Left lung (tissue), 14 donors: ENCODE measurements at regions of chr4 and their contacts with region 1.

Region 1: GRCh38 chr4:143482840-143483239 is 30.7 kb upstream of the SMARCA5 start:
- DNase-seq: peak in 2 of 4 donors; percentile 37 to 61
- ATAC-seq: peak; percentile 83
- H3K4me3 ChIP-seq: no peak overlapping the region
- H3K27ac ChIP-seq: no peak overlapping the region
- H3K4me1 ChIP-seq: no peaks in the 10 kb centered on the region
- H3K27me3 ChIP-seq: no peaks in the 10 kb centered on the region
- CTCF ChIP-seq: peak; percentile 27 to 50

Region 2: DNA sequence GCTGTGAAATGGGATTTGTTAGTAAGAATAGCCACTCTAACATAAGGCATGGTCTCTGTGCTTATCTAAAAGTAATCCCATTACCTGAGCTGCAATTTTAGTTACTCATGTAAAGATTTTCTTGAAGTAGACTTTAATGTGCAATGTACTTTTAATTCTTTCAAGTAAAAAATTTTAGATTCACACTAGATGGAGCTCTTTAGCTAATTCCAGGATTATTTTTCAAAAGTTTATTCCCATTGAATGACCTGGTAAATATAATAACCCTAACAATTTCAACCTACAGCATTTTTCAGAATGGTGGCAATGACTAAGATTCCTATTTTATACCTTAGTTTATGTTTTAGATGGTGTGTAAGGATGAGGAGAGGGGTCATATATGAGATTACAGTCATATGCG is 280.0 kb before region 1 on chr4:
- intact Hi-C with region 1: loop called in 1 of 2 experiments (anchors 5 kb)
- DNase-seq: peak in 1 of 4 donors; percentile 13
- ATAC-seq: no peak
- H3K4me3 ChIP-seq: no peak overlapping the region
- H3K27ac ChIP-seq: no peak overlapping the region
- H3K4me1 ChIP-seq: no peaks in the 10 kb centered on the region
- H3K27me3 ChIP-seq: no peaks in the 10 kb centered on the region
- CTCF ChIP-seq: peak in 1 of 2 donors; percentile 30